Naive thymus-derived CD8-positive, alpha-beta T cell (primary cell): ENCODE measurements at regions of chr6 and their contacts with region 1.

Region 1: DNA sequence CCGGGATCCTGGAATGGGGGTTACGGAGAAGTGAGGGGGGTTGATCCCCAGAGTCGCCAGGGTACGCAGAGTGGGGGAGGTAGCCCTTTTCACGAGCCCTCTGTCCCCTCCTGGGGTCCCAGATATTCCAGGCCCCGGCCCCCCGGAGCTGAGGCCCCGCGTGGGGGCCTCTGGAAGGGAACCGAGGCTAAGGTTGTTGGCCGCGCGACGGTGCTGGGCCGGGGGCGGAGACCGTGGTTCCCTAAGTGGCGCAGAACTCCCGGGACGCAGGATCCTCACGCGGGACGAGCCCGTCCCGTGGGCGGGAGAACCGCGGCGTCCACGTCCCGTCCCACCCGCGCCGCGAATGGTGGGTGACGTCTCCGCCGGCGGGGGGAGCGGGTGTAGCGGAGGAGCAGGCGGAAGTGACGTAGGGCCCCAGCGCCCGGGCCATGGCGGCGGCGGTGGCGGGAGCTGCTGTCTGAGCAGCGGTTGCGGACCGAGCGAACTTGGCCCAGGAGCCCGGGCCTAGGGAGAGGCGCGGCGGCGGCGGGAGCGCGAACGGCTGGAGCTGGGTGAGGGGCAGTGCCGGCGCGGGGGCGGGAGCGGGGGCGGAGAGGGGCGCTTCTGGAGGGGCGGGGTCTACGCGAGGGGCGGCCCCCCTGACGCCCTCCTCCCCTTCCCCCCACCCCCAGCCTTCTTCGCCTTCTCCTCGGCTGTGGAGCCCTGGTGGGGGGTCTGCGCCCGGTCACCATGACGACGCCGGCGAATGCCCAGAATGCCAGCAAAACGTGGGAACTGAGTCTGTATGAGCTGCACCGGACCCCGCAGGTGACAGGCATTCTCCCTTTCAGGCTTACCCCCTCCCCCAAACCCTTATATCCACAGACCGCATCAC is at the start of gene RING1:
- DNase-seq: peak; percentile 79 to 91 (median 87)
- ATAC-seq: peak; percentile 58 to 69
- H3K4me3 Mint-ChIP-seq: peak within 1 kb of the TSS; percentile 84 to 99 (median 94)
- H3K27ac Mint-ChIP-seq: peak within 1 kb of the TSS; percentile 88 to 98 (median 96)
- H3K4me1 Mint-ChIP-seq: peaks cover 38 to 66% (median 61%) of the 10 kb centered on the region in 4 donors
- H3K27me3 Mint-ChIP-seq: peaks cover 0 to 3% (median 0%) of the 10 kb centered on the region in 5 donors
- polyA plus RNA-seq, gene RING1: 12.1 to 12.5 (median 12.4) TPM

Region 2: DNA sequence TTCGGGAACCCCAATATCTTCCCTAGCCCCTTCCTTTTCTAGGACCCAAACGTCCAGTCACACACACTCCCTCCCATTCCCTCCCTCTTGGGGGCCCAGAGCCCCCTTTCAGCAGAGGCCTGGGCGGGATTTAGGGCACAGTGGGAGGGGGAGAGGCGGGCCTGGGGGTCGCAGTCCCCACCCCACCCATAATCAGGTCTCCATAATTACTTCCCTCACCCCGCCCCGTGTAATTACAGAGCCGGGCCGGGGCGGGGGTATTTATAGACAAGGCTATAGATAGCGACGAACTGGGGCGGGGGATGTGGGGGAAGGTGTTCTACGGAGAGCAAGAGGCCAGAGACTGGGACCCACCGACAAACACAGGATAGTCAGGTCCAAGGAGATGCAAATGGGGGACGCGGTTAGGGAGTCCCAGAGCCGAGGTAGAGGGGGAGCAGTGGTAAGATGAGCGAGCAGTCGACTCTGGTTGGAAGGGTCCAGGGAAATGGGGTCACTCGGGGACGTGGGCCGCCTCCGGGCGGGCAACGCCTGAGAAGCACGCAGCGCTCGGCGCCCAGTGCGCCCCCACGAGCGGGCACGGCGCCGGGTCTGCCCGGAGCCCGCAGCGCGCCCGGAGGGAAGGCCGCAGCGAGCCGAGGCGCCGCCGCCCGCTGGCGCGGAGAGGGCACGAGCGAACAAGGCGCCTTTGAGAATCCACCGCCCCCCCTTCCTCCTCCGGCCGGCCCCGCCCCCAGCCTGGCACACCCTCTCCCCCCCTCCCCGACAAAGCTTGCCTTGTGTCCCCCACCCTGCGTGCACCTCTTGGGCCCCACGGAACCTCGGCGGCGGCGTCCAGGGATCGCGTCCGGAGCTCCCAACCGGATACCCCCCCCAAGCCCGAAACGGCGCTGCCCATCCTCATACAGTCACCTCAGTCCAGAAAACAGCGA is 15.4 kb before region 1 on chr6:
- POLR2A ChIA-PET with region 1: interaction called, 43 read pairs
- DNase-seq: peak in 5 of 10 donors; percentile 34 to 69 (median 43)
- ATAC-seq: peak; percentile 31 to 53
- H3K4me3 Mint-ChIP-seq: peak overlapping the region; percentile 78 to 93 (median 87)
- H3K27ac Mint-ChIP-seq: peak overlapping the region in 8 of 10 donors; percentile 36 to 89 (median 77)
- H3K4me1 Mint-ChIP-seq: peaks cover 24 to 39% (median 25%) of the 10 kb centered on the region in 4 donors
- H3K27me3 Mint-ChIP-seq: peaks cover 3 to 32% (median 18%) of the 10 kb centered on the region in 5 donors